PC-9 (cell line): ENCODE measurements at regions of chr7 and their contacts with region 1.

Region 1: DNA sequence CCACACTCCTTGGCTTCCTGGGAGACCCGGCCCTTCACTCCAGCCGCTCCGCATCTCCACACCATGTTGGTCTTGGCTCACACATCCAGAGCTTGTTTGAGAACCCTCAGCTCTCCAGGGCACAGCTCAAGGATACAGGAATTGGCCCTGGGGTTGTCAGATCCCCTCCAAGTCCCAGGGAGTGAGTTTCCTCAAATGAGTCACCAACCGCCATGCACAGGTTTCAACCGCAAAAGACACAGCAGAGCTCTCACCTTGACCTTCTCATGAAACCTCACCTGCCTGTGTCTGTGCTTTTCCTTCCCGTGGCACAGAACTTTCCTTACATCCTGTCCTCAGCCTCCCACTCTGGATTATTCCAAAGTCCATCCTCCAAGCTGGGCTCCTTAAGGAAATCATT is 20.6 kb downstream of the AZGP1 start:
- DNase-seq: peak; percentile 79 to 88
- H3K4me3 ChIP-seq: no peak overlapping the region
- H3K27ac ChIP-seq: peak overlapping the region; percentile 22
- H3K4me1 ChIP-seq: peaks cover 12% of the 10 kb centered on the region
- H3K27me3 ChIP-seq: peaks cover 18% of the 10 kb centered on the region; the same call in 1 of the 2 replicates
- CTCF ChIP-seq: no peak

Region 2: DNA sequence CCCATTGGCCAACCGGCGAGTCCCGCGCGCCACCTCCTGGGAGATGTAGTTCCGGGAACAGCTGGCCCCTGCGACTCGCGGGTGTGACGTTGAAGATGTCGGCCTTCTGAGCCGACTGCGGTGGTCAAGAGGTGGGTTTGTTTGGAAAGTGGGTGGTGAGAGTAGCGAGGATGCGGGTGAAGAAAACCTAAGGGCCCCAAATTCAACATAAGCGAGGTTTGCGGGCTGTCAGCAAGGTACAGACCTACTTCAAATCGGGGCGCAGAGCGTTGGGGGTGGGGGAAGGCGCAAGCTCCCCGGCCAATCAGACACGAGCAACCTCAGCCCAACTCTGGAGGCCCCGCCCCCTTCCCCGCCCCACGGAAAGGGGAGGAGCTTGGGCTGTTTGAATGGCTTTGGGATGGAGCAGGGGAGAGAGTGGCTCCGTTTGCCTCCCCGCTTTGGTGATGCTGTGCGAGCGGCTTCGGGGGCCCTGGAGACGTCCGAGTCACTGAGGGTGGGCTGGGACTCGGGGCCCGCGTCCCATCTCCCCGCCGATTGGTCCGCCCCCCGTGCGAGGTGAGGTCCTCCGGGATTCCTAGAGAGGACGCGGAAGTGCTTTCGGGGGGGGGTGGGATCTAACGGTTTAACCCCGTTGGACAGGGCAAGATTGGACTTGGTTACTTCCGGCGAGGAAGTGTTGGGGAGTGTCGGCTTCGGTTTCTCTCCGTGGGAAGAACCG is 450.5 kb before region 1 on chr7 and contains the start of gene ZKSCAN5:
- CTCF ChIA-PET with region 1: no interaction called
- POLR2A ChIA-PET with region 1: no interaction called
- intact Hi-C with region 1: no loop called
- DNase-seq: peak; percentile 82 to 99
- H3K4me3 ChIP-seq: peak within 1 kb of the TSS; percentile 71
- H3K27ac ChIP-seq: no peak within 1 kb of the TSS
- H3K4me1 ChIP-seq: peaks cover 14% of the 10 kb centered on the region
- H3K27me3 ChIP-seq: no peaks in the 10 kb centered on the region
- CTCF ChIP-seq: no peak; the same call in 1 of the 2 replicates
- total RNA-seq, gene ZKSCAN5: 10.0 and 13.2 TPM in 2 replicates

Region 3: DNA sequence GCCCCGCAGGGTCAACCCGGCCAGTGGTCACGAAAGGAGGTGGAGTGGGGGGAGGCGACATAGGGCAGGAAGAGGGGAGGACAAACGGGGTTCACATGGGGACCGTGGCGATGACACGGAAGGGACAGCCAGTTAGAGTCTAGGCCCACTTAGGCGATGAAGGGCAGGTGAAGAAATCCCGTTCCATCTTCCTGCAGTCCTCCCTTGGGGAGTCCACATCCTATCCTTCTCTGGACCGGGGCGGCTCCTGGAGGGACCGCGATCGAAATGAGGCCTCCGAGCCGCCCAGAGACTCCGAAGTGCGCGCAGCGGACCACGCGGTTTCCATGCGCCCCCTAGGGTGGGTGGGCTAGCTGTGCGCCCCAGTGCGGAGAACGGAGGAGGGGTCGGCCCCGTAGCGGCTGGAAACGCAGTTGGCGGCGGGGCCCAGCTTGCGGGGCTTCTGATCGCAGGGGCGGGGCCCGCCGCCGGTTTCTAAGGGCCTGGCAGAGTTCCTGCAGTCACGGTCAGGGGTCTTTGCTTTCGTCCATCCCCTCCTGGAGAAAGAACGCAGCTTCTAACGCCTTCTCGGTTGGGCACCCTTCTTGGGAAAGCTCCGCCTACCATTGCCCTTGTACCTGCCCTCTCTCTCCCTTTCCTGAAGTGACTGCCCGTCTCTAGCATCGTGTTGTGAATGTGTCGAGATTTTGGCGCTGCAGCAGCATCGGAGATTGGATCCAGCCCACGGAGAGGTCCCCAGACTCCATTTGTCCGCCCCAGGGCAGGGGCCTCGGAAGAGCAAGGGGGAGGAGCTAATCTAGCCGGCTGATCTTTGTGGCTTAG is 375.1 kb before region 1 on chr7:
- CTCF ChIA-PET with region 1: no interaction called
- POLR2A ChIA-PET with region 1: interaction called, 10 read pairs
- intact Hi-C with region 1: no loop called
- DNase-seq: no peak
- H3K4me3 ChIP-seq: no peak overlapping the region
- H3K27ac ChIP-seq: no peak overlapping the region
- H3K4me1 ChIP-seq: no peaks in the 10 kb centered on the region
- H3K27me3 ChIP-seq: peaks cover 25% of the 10 kb centered on the region; the same call in 1 of the 2 replicates
- CTCF ChIP-seq: no peak

Region 4: DNA sequence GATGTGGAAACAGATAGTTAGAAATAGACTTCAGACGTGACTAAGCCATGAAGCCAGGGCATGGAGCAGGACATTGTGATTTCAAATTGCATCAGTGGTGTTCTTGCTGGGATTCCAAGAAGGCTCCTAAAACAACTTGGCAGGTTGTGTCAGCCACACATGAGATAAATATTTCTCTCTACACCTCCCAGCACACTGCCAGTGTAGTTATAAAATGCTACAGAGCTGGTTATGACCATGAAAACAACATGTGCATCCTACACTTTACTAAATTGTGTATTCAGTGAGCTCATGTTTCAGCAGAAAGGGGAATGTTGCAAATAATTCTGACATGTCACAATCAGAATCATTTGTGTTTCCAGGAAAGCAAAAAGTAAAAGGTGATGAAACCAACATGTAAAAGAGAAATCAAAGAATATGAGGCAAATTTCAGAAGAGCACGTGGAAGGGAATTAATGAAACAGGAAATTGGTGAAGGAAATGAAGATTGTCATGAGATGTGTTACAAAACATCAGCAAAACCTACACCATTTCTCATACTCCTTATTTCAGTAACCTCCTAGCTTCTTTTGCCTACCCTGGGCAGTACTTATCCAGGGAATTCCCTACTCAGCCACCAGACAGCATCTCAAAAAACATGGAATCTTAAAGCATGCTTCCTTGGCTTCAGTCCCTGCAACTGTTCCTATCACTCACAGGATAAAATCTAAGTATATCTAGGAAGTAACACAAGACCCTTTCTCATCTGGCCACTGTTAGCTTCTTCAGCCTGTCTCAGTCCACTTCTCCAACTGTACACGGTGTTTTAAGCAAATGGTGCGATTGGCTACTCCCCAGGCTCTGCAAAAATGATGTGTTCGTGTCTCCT is 214.4 kb before region 1 on chr7:
- CTCF ChIA-PET with region 1: no interaction called
- POLR2A ChIA-PET with region 1: no interaction called
- intact Hi-C with region 1: no loop called
- DNase-seq: peak in 1 of 2 experiments; percentile 45
- H3K4me3 ChIP-seq: no peak overlapping the region
- H3K27ac ChIP-seq: no peak overlapping the region
- H3K4me1 ChIP-seq: 0 out of 2 replicates have a peak, but pooled peaks cover 7% of the 10 kb centered on the region
- H3K27me3 ChIP-seq: no peaks in the 10 kb centered on the region
- CTCF ChIP-seq: no peak

Region 5: DNA sequence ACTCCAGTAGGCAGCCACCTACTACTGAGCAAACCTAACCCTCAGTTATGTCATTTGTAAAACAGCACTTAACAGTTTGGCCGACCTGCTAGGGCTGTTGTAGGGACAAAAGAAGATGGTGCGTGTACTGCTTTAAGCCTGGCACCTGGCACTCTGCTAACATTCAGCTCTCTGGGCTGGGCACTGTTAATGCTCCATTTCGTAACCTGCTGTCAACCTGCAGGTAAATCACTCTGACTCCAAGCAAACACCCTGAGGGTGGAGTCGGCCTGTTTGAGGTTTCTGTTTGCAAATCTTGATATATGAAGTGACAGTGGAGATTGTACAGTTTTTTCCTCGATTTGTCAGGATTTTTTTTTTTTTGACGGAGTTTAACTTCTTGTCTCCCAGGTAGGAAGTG is 67.4 kb after region 1 on chr7:
- CTCF ChIA-PET with region 1: interaction called, 10 read pairs
- POLR2A ChIA-PET with region 1: no interaction called
- intact Hi-C with region 1: no loop called
- DNase-seq: peak; percentile 42 to 87
- H3K4me3 ChIP-seq: no peak overlapping the region
- H3K27ac ChIP-seq: no peak overlapping the region
- H3K4me1 ChIP-seq: peaks cover 25% of the 10 kb centered on the region
- H3K27me3 ChIP-seq: no peaks in the 10 kb centered on the region
- CTCF ChIP-seq: no peak